Activated CD4-positive, alpha-beta T cell treated with anti-CD3 and anti-CD28 coated beads for 36 hours (primary cell): ENCODE measurements at regions of chr6 and their contacts with region 1.

Region 1: DNA sequence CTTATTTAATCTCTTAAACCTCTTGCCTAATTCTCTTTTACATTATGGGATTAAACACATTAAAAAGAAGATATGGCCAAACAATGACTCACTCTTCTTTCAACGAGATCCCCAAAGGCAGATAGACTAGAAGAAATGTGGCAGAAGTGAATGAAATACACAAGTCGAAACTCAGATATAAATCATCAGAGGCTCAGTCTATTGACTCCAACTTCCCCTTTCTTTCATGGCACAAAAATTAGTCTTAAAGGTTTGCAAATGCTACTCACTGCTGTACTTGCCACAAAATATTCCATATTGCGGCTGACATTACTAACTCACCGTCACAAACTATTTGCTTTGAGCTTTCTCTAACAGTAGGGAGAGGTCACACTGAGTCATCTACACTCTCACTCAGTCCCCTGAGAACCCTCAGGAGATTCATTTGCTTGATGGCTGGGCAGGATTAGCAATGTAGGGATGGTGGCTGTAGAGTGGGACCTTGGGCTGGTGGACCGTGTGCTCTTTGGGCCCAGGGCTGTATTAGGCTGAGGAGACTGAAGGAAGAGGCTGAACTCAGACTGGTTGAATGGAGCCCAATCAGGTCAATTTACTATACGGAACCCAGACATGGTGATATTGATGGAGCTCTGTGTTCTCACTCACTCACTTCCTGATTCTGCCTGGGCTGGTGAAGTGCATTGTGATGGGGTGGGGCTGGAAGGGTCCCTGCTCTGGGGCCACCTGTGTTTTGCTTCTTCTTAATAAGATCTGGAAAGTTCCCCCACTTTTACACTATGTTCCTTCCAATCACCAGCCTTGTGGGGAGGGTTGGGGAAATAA is 42.8 kb upstream of the UBR2 start:
- DNase-seq: peak; percentile 49
- ATAC-seq: peak; percentile 97
- H3K4me3 Mint-ChIP-seq: no peak overlapping the region
- H3K27ac Mint-ChIP-seq: peak overlapping the region; percentile 76
- H3K4me1 Mint-ChIP-seq: peaks cover 24% of the 10 kb centered on the region
- H3K27me3 Mint-ChIP-seq: no peaks in the 10 kb centered on the region

Region 2: DNA sequence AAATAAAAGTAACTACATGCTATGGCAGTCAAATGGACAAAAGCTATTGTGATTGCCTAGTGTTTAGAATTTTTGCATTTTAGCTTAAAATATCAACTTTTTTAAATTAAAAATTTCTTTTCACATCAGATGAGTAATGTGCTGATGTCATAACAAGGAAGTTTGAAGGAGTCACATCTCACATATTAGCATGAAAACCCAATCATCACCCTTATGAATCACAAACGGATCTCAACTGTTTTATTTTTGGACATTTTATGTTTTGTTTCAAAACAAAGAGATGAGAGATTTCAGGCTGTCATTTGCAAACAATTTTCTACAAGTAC is 15.7 kb before region 1 on chr6:
- CTCF ChIA-PET with region 1: interaction called, 4 read pairs
- POLR2A ChIA-PET with region 1: interaction called, 3 read pairs
- intact Hi-C with region 1: loop called in 1 of 2 experiments (anchors 1 kb)
- DNase-seq: no peak
- ATAC-seq: peak; percentile 63
- H3K4me3 Mint-ChIP-seq: no peak overlapping the region
- H3K27ac Mint-ChIP-seq: no peak overlapping the region
- H3K4me1 Mint-ChIP-seq: peaks cover 33% of the 10 kb centered on the region
- H3K27me3 Mint-ChIP-seq: no peaks in the 10 kb centered on the region

Region 3: GRCh38 chr6:42604150-42604549 is 83.2 kb after region 1 on chr6:
- CTCF ChIA-PET with region 1: no interaction called
- POLR2A ChIA-PET with region 1: no interaction called
- intact Hi-C with region 1: no loop called
- DNase-seq: no peak
- ATAC-seq: peak; percentile 49
- H3K4me3 Mint-ChIP-seq: no peak overlapping the region
- H3K27ac Mint-ChIP-seq: no peak overlapping the region
- H3K4me1 Mint-ChIP-seq: peaks cover 5% of the 10 kb centered on the region
- H3K27me3 Mint-ChIP-seq: no peaks in the 10 kb centered on the region